ENCODE measurements at regions of chr1 and their contacts with region 1.

Region 1: DNA sequence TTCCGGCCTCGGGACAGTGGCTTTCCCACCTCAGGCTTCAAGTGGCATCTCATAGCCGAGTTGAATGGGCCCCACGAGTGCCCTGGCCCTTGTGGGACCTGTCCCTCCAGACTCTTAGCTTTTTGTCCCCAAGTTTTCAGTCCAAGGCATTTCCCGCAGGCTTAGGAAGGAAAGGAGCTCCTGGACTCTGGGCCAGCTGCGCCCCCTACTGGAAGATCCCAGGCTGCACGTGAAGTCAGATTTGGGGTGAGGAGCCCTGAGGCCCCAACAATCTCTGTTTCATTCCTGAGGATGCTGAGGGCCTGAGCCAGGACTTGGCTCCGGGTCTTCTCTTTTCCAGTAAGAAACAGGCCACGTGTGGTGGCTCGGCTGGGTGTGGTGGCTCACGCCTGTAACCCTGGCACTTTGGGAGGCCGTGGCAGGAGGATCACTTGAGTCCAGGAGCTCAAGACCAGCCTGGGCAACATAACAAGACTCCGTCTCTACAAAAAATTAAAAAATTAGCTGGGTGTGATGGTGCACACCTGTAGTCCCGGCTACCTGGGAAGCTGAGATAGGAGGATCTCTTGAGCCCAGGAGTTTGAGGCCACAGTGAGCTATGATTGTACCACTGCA is 67.4 kb downstream of the ARHGEF10L start:
- DNase-seq: peak; percentile 86
- ATAC-seq: peak; percentile 56

Region 2: GRCh38 chr1:17502326-17502778 is 104.6 kb before region 1 on chr1:
- intact Hi-C with region 1: loop called (anchors 1 kb)
- DNase-seq: peak; percentile 92
- ATAC-seq: peak; percentile 97

Region 3: GRCh38 chr1:17849216-17849615 is 242.3 kb after region 1 on chr1:
- intact Hi-C with region 1: no loop called
- DNase-seq: no peak
- ATAC-seq: no peak

Measured in Right ventricle myocardium inferior (tissue), 1 donor.